Posterior cingulate gyrus (tissue), 11 donors: ENCODE measurements at regions of chr2 and their contacts with region 1.

Region 1: GRCh38 chr2:105521205-105521604 is 122.4 kb upstream of the FHL2 start:
- DNase-seq: no peak

Region 2: DNA sequence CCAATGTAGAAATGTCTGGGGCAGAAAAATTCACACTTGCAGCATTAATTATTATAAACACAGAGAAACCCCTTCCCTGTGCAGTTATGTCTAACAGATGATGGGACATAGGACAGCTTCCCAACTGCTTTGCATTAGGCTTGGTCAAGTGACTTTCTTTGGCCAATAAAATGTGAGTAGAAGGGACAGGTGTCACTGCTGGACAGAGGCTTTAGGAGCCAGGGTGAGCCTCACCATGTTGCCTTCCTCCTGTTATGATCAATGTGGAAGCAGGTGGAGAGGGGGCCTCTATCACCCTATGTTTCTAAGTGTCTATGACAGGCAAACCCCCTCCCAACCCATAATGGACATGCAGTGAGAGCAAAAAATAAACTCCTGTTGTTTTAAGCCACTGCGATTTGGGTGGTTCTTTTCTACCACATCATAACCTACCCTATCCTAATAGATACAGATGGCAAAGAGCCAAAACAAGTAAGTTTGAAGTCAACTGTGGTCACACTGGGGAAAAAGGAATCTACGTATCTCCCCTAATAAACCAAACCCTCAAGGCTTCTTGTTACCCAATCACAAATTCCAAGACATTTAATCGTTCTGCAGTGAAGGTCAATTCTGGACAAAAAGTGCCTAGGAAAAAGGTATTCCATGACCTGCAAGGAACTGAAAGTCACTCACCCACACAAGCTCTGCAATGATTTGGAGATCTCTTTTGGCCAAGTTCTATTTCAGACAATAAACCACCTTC is 695.9 kb before region 1 on chr2:
- intact Hi-C with region 1: no loop called
- DNase-seq: no peak

Region 3: GRCh38 chr2:105369747-105370690 is 151.2 kb before region 1 on chr2:
- intact Hi-C with region 1: loop called (anchors 1 kb)
- DNase-seq: peak; percentile 78 to 98 (median 89)

Region 4: DNA sequence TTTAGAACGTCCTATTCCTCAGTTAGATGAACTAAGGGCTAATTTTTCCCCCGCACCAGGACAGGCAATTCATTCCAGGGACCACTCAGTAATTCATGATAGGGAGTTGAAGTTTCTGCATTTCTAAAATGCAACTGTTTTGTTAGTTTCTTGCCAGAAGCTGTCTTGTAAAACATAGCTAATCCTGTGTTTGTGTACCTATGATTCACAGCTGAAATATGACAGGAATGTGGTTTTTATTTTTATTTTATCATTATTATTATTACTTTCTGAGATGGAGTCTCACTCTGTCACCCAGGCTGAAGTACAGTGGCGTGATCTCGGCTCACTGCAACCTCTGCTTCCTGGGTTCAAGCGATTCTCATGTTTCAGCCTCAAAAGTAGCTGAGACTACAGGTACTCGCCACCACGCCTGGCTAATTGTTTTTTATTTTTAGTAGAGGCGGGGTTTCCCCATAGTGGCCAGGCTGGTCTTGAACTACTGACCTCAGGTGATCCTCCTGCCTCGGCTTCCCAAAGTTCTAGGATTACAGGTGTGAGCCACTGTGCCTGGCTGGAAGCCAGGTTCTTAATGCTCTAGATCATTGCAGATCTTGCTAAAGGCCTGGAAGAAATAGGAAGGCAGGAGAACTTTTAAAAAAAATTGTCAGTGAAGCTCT is 32.5 kb after region 1 on chr2:
- intact Hi-C with region 1: no loop called
- DNase-seq: no peak